T-cell (primary cell): ENCODE measurements at regions of chr5 and their contacts with region 1.

Region 1: DNA sequence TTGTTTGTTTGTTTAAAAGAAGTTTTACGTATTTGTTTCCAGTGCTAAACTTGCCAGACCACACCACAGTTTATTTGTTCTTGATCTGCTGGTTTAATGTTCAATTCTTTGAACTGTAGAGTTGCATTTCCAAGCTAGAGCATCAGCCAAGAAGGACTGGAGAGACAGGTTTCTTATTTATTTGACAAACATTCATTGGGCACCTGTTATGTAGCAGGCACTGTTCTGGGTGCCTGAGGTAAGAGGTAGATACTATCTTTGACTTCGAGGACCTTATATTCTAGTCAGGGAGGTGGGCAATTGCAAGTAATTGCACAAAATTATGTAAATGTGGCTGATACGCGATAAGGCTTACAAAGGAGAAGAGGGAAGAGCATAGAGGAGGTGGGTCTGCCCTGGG is 45.1 kb downstream of the MCCC2 start:
- DNase-seq: no peak
- ATAC-seq: no peak
- H3K4me3 ChIP-seq: no peak overlapping the region
- H3K4me3 Mint-ChIP-seq: no peak overlapping the region
- H3K27ac ChIP-seq: no peak overlapping the region
- H3K27ac Mint-ChIP-seq: no peak overlapping the region
- H3K4me1 ChIP-seq: no peaks in the 10 kb centered on the region
- H3K4me1 Mint-ChIP-seq: peaks cover 1 to 5% (median 4%) of the 10 kb centered on the region in 3 donors
- H3K27me3 ChIP-seq: no peaks in the 10 kb centered on the region
- H3K27me3 Mint-ChIP-seq: no peaks in the 10 kb centered on the region

Region 2: DNA sequence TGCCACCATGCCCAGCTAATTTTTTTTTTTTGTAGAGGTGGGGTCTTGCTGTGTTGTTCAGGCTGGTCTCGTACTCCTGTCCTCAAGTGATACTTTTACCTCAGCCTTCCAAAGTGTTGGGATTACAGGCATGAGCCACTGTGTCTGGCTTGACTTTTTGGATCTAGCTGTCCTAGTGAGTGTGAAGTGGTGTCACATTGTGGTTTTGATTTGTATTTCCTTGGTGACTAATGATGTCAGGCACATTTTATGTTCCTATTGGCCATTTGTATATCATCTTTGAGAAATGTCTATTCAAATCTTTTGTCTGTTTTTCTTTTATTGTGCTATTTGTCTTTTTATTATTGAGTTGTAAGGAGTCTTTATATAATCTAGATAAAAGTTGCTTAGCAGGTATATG is 98.6 kb before region 1 on chr5:
- CTCF ChIA-PET with region 1: no interaction called
- POLR2A ChIA-PET with region 1: interaction called in 1 of 2 experiments, 10 read pairs
- DNase-seq: peak in 1 of 35 experiments; percentile 64
- ATAC-seq: peak; percentile 43 to 62 (median 59)
- H3K4me3 ChIP-seq: no peak overlapping the region
- H3K4me3 Mint-ChIP-seq: no peak overlapping the region
- H3K27ac ChIP-seq: no peak overlapping the region
- H3K27ac Mint-ChIP-seq: peak overlapping the region in 1 of 2 donors; percentile 1
- H3K4me1 ChIP-seq: no peaks in the 10 kb centered on the region
- H3K4me1 Mint-ChIP-seq: peaks cover 8 to 15% (median 10%) of the 10 kb centered on the region in 3 donors
- H3K27me3 ChIP-seq: no peaks in the 10 kb centered on the region
- H3K27me3 Mint-ChIP-seq: no peaks in the 10 kb centered on the region